Endothelial cell of umbilical vein (primary cell): ENCODE measurements at regions of chr10 and their contacts with region 1.

Region 1: DNA sequence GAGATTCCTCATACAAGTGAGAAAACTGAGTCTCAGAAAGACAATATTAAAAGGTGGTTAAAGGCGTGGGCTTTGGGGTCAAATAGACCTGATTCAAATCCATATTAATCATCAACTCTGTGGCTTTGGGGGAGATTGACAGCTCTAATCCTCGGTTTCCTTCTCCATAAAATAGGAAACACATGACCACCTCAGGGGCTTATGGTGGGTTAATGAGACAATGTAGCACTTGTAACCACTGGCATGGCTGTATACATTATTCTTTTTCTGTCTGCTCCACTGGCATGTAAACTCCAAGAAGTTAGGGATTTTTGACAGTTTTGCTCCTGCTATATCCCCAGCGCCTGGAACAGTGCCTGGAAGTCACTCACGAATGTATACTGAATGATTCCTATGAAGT is 120.8 kb upstream of the GAD2 start:
- DNase-seq: no peak
- H3K4me3 ChIP-seq: no peak overlapping the region
- H3K27ac ChIP-seq: no peak overlapping the region
- H3K4me1 ChIP-seq: no peaks in the 10 kb centered on the region
- H3K27me3 ChIP-seq: no peaks in the 10 kb centered on the region
- CTCF ChIP-seq: no peak
- POLR2A ChIP-seq: no peak

Region 2: DNA sequence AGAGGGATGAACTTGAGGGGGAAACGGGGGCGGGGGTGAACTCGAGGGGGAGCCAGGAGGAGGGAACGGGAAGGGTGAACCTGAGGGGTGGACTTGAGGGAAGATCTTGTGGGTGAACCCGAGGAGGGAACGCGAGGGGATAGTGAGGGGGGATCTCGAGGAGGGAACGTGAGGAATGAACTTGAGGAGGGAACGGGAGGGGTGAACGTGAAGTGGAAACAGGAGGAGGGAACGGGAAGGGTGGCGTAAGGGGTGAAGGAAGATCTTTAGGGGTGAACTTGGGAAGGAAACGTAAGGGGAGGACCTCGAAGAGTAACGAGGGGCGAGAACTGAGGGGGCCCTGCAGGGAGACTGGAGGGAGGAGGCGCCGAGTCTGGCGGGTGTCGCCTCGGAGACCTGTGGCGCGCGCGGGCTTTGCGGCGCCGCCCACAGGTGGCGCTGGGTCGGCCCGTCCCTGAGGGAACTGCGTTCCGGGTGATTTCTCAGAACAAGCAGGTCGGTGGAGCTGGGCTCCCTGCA is 161.1 kb before region 1 on chr10:
- CTCF ChIA-PET with region 1: no interaction called
- POLR2A ChIA-PET with region 1: no interaction called
- dilution Hi-C with region 1: no loop called
- intact Hi-C with region 1: no loop called
- DNase-seq: no peak
- H3K4me3 ChIP-seq: no peak overlapping the region
- H3K27ac ChIP-seq: no peak overlapping the region
- H3K4me1 ChIP-seq: no peaks in the 10 kb centered on the region
- H3K27me3 ChIP-seq: no peaks in the 10 kb centered on the region
- CTCF ChIP-seq: no peak
- POLR2A ChIP-seq: no peak

Region 3: DNA sequence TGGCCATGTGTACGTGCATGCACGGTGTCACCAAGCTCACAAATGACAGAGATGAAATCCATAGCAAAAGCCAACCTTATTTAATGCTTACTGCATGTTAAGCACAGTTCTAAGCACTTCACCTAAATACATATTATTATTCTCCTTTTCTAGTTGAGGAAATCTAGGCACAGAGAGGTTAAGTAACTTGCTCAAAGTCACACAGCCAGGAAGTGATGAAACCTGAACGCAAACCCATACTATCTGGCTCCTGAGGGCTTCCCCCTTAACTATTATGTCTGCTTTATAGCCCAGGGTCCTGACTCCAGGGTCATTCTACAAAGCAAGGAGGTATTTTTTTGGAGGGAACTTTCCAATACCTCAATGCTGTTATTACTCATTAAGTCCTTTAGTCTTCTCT is 182.5 kb after region 1 on chr10:
- CTCF ChIA-PET with region 1: no interaction called
- POLR2A ChIA-PET with region 1: no interaction called
- dilution Hi-C with region 1: no loop called
- intact Hi-C with region 1: no loop called
- DNase-seq: no peak
- H3K4me3 ChIP-seq: no peak overlapping the region
- H3K27ac ChIP-seq: no peak overlapping the region
- H3K4me1 ChIP-seq: no peaks in the 10 kb centered on the region
- H3K27me3 ChIP-seq: no peaks in the 10 kb centered on the region
- CTCF ChIP-seq: no peak
- POLR2A ChIP-seq: no peak

Region 4: DNA sequence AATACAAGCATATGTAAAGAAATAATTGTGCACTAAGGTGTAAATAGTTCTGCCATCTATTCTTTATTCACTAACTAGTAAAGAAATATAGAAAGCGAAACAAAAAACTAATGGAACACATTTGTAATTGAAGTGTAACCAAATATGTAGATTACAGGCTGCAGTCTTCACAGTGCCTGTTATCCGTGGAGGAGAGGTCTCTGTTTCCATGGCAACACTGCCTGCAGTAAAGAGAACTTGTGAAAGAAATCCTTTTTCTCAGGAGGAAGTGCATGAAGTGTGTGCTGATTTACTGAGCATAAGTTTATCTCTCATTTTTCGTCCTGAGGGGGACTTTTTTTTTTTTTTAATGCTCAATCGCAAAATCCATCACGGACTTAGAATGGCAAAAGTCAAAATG is 444.8 kb after region 1 on chr10:
- CTCF ChIA-PET with region 1: no interaction called
- POLR2A ChIA-PET with region 1: no interaction called
- dilution Hi-C with region 1: no loop called
- intact Hi-C with region 1: loop called (anchors 5 kb)
- DNase-seq: no peak
- H3K4me3 ChIP-seq: no peak overlapping the region
- H3K27ac ChIP-seq: no peak overlapping the region
- H3K4me1 ChIP-seq: no peaks in the 10 kb centered on the region
- H3K27me3 ChIP-seq: no peaks in the 10 kb centered on the region
- CTCF ChIP-seq: no peak
- POLR2A ChIP-seq: no peak